ENCODE measurements at regions of chr7 and their contacts with region 1.

Region 1: GRCh38 chr7:74173866-74174605 is at the start of gene EIF4H:
- DNase-seq: peak; percentile 99
- ATAC-seq: peak; percentile 80
- H3K4me3 Mint-ChIP-seq: peak within 1 kb of the TSS; percentile 91
- H3K27ac Mint-ChIP-seq: peak within 1 kb of the TSS; percentile 89
- H3K4me1 Mint-ChIP-seq: peaks cover 47% of the 10 kb centered on the region
- H3K27me3 Mint-ChIP-seq: no peaks in the 10 kb centered on the region
- CTCF ChIP-seq: no peak
- total RNA-seq, gene EIF4H: 263 and 280 TPM in 2 replicates

Region 2: GRCh38 chr7:74083117-74083876 is 90.7 kb before region 1 on chr7 and contains the start of gene LIMK1:
- CTCF ChIA-PET with region 1: no interaction called
- POLR2A ChIA-PET with region 1: interaction called, 21 read pairs
- intact Hi-C with region 1: loop called (anchors 1 kb)
- DNase-seq: peak; percentile 86
- ATAC-seq: peak; percentile 95
- H3K4me3 Mint-ChIP-seq: peak within 1 kb of the TSS; percentile 84
- H3K27ac Mint-ChIP-seq: peak within 1 kb of the TSS; percentile 53
- H3K4me1 Mint-ChIP-seq: peaks cover 7% of the 10 kb centered on the region
- H3K27me3 Mint-ChIP-seq: no peaks in the 10 kb centered on the region
- CTCF ChIP-seq: no peak
- total RNA-seq, gene LIMK1: 59.6 and 62.7 TPM in 2 replicates

Region 3: GRCh38 chr7:74094224-74095101 is 79.6 kb before region 1 on chr7:
- CTCF ChIA-PET with region 1: no interaction called
- POLR2A ChIA-PET with region 1: interaction called, 33 read pairs
- intact Hi-C with region 1: no loop called
- DNase-seq: peak; percentile 46
- ATAC-seq: peak; percentile 72
- H3K4me3 Mint-ChIP-seq: peak overlapping the region; percentile 90
- H3K27ac Mint-ChIP-seq: peak overlapping the region; percentile 95
- H3K4me1 Mint-ChIP-seq: peaks cover 47% of the 10 kb centered on the region
- H3K27me3 Mint-ChIP-seq: no peaks in the 10 kb centered on the region
- CTCF ChIP-seq: no peak

Region 4: DNA sequence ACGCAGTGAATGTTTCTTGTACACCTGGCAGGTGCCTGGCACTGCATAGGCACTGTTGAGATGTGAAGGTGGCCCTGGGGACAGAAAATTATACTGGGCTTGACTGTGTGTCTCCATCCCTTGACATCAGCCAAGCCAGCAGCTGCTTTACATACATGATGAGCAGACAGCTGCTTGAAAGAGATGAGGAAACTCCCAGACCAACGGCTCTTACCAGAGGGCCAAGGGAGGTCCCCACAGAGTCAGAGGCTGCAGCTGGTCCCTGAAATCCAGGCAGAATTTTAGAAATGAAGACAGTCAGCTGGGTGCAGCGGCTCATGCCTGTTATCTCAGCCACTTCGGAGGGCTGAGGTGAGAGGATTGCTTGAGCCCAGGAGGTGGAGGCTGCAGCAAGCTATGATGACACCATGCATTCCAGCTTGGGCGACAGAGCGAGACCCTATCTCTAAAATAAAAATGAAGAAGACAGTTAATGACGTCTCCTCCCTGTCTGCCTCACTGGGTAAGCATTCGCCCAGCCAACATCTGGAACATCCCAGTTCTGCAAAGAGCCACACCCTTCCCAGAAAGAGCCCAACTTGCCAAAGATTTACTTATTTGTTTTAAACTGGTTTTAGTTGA is 72.9 kb before region 1 on chr7:
- CTCF ChIA-PET with region 1: interaction called, 3 read pairs
- POLR2A ChIA-PET with region 1: interaction called, 33 read pairs
- intact Hi-C with region 1: loop called (anchors 1 kb)
- DNase-seq: peak; percentile 60
- ATAC-seq: peak; percentile 79
- H3K4me3 Mint-ChIP-seq: peak overlapping the region; percentile 70
- H3K27ac Mint-ChIP-seq: peak overlapping the region; percentile 98
- H3K4me1 Mint-ChIP-seq: peaks cover 38% of the 10 kb centered on the region
- H3K27me3 Mint-ChIP-seq: no peaks in the 10 kb centered on the region
- CTCF ChIP-seq: no peak

Region 5: GRCh38 chr7:74121401-74122249 is 52.4 kb before region 1 on chr7:
- CTCF ChIA-PET with region 1: no interaction called
- POLR2A ChIA-PET with region 1: interaction called, 11 read pairs
- intact Hi-C with region 1: no loop called
- DNase-seq: peak; percentile 23
- ATAC-seq: peak; percentile 82
- H3K4me3 Mint-ChIP-seq: no peak overlapping the region
- H3K27ac Mint-ChIP-seq: peak overlapping the region; percentile 79
- H3K4me1 Mint-ChIP-seq: peaks cover 4% of the 10 kb centered on the region
- H3K27me3 Mint-ChIP-seq: no peaks in the 10 kb centered on the region
- CTCF ChIP-seq: no peak

Region 6: DNA sequence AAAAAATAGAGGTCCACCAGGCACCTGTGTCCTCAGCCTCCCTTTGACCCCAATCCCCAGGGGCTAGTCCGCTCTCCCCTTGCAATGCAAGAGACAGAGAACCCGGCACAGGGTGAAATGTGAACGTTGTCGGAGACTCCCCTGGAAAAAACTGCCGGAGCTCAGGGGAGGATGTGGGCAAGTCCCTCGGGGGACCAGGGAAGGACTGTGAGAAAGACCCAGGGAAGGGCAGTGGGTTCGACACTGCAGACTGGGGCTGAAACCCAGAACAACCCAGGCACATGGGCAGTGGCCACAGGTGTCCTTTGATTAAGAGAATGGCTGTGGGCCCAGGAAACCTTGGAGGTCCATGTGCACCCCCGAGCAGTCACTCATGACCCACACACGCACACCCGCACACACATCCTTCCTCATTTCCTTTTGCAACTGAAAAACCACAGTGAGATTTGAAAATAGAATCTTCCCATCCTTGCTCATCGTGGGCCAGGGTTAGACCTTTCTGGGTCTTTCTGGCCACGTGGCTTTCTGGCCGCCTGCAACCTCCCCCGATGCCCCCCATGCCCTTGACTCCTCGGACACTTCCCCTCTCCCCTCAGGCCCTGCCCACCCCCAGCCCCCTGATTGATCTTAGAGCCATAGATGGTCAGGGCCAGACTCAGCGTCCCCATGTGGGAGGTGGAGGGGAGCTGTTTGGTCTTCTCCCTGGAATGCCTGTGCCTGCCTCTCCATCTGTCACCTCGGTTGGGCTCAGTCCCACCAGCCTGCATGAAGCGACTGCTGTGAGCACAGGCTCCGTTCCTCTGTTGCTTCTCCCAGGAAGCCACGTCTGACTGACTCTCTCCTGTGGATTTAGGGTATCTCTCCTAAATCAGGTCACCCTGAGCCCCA is 43.7 kb after region 1 on chr7:
- CTCF ChIA-PET with region 1: no interaction called
- POLR2A ChIA-PET with region 1: interaction called, 12 read pairs
- intact Hi-C with region 1: no loop called
- DNase-seq: peak; percentile 51
- ATAC-seq: peak; percentile 59
- H3K4me3 Mint-ChIP-seq: peak overlapping the region; percentile 69
- H3K27ac Mint-ChIP-seq: peak overlapping the region; percentile 90
- H3K4me1 Mint-ChIP-seq: peaks cover 63% of the 10 kb centered on the region
- H3K27me3 Mint-ChIP-seq: no peaks in the 10 kb centered on the region
- CTCF ChIP-seq: no peak